Dorsolateral prefrontal cortex (tissue), 120 donors: ENCODE measurements at regions of chr4 and their contacts with region 1.

Region 1: DNA sequence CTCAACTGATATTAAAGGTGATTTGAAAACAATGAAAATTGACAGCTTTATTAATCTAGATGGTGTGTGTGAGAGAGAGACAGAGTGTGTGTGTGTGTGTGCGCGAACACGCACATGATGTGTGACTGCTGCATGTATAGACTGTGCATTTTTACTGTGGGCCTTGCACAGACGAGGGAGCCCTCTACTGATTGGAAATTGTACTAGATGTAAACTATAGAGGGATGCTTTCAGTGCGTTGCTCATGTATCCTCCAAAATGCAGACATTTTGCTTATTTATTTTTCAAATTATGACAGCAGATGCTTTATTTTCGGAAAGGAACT is 168.4 kb upstream of the GK2 start:
- DNase-seq: peak in 2 of 10 donors; percentile 19 to 39
- H3K4me3 ChIP-seq: no peak overlapping the region
- H3K27ac ChIP-seq: no peak overlapping the region
- H3K27me3 ChIP-seq: no peaks in the 10 kb centered on the region
- CTCF ChIP-seq: peak in 53 of 56 donors; percentile 14 to 66 (median 45)

Region 2: GRCh38 chr4:78951862-78952472 is 624.4 kb before region 1 on chr4:
- intact Hi-C with region 1: loop called in 1 of 2 experiments (anchors 5 kb)
- DNase-seq: peak in 2 of 10 donors; percentile 18 to 43
- H3K4me3 ChIP-seq: no peak overlapping the region
- H3K27ac ChIP-seq: no peak overlapping the region
- H3K27me3 ChIP-seq: no peaks in the 10 kb centered on the region
- CTCF ChIP-seq: peak; percentile 50 to 94 (median 78)

Region 3: GRCh38 chr4:79042079-79042674 is 534.2 kb before region 1 on chr4:
- intact Hi-C with region 1: loop called in 1 of 2 experiments (anchors 10 kb)
- DNase-seq: peak in 1 of 10 donors; percentile 26
- H3K4me3 ChIP-seq: no peak overlapping the region
- H3K27ac ChIP-seq: no peak overlapping the region
- H3K27me3 ChIP-seq: no peaks in the 10 kb centered on the region
- CTCF ChIP-seq: peak in 53 of 56 donors; percentile 30 to 70 (median 48)